ENCODE measurements at regions of chr17 and their contacts with region 1.

Region 1: DNA sequence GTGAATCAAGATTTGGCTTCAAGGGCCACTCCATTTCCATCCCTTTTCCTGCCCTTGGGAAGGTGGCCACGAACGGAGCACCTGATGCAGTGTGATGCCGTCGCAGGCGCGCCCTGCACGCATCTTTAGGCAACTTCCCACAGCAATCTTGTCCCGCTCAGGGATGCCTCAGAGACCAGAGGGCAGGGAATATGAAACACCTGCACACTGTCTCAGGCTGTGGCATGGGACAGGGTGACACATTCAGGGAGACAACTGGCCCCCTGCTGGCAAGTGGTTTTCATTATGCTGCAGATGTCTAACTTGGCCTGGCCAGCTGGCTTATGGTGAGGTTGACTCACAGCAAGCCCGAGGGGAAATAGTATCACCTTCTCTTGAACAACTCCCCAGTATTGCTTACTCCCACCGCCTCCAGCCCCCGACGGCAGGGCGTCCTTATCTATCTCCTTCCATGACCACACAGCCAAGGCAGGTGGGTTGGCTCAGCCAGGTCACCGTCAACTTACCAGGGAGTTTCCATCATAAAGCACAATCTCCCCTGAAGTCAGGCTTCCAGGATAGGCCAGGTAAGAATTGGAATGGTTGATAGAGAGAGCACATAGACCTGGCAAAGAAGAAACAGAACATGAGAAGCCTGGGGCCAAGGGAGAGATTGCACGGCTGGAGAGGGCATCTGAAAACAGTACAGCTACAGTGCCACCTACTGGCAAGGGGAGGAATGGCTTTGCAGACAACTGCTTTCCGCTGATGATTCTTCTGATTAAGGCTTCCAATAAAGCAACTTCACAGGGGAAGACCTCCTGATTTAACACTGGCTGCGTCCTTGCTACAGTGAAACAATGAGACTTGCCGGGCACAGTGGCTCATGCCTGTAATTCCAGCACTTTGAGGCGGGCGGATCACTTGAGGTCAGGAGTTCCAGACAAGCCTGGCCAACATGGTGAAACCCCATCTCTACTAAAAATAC is 21.1 kb downstream of the WIPI1 start:
- DNase-seq: peak; percentile 55
- H3K4me3 ChIP-seq: no peak overlapping the region
- H3K27me3 ChIP-seq: no peaks in the 10 kb centered on the region
- CTCF ChIP-seq: peak; percentile 93

Region 2: GRCh38 chr17:68260051-68260762 is 176.0 kb before region 1 on chr17:
- CTCF ChIA-PET with region 1: interaction called, 52 read pairs
- POLR2A ChIA-PET with region 1: no interaction called
- DNase-seq: no peak
- H3K4me3 ChIP-seq: no peak overlapping the region
- H3K27me3 ChIP-seq: no peaks in the 10 kb centered on the region
- CTCF ChIP-seq: no peak

Region 3: DNA sequence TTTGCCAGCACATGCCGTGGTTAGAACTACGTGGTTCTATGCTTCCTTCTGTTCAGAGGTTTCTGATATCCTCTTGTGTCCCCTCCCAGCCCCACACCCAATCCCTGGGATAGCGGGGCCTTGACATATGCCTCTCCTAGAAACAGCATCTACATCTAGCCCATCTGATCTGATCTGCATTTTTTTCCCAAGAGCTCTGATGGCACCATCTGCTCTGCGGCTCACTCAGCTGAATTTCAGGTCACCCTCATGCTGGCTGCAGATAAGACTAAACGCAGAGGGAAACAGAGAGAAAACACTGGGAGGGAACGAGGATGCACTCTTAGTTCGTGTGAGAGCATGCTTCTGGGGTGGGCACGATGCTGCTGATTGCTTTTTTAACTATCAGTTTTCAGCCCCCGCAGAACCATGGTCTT is 10.5 kb after region 1 on chr17:
- CTCF ChIA-PET with region 1: interaction called, 19 read pairs
- POLR2A ChIA-PET with region 1: no interaction called
- DNase-seq: no peak
- H3K4me3 ChIP-seq: no peak overlapping the region
- H3K27me3 ChIP-seq: no peaks in the 10 kb centered on the region
- CTCF ChIP-seq: no peak

Region 4: DNA sequence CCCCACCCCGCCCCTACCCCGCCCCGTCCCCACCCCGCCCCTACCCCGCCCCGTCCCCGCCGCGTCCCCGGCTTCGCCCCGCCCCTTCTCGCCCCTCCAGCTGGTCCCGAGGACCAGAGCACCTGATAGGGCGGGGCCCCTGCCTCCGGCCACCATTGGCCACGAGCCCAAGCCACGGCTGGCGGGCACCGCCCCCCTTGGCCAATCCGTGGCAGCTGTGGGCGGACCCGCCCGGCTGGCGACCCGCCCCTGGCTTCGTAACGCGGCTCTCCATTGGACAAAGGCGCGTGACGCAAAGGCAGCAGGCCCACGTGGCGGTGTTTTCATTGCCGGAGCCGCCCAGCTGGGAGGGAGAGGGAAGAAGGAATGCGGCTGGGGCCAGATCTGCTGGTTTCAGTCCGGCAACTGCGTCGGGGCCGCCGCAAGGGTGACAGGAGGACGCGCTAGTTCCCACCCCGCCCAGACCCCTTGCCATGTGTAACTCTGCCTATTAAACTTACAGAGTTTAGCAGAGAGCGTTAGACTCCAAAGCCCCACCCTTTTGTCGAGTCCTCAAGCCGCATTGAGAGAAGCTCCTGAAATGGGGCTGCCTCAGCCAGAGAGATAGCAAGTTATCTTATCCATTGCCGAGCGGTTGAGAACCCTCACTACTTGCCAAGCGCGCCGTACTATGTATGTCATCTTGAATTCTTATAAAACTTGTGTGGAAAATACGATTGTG is 21.5 kb after region 1 on chr17:
- CTCF ChIA-PET with region 1: interaction called, 11 read pairs
- POLR2A ChIA-PET with region 1: no interaction called
- DNase-seq: peak; percentile 84
- H3K4me3 ChIP-seq: peak overlapping the region; percentile 55
- H3K27me3 ChIP-seq: 0 out of 2 replicates have a peak, but pooled peaks cover 2% of the 10 kb centered on the region
- CTCF ChIP-seq: 0 out of 2 replicates have a peak, but pooled peaks have one; percentile 5

Region 5: DNA sequence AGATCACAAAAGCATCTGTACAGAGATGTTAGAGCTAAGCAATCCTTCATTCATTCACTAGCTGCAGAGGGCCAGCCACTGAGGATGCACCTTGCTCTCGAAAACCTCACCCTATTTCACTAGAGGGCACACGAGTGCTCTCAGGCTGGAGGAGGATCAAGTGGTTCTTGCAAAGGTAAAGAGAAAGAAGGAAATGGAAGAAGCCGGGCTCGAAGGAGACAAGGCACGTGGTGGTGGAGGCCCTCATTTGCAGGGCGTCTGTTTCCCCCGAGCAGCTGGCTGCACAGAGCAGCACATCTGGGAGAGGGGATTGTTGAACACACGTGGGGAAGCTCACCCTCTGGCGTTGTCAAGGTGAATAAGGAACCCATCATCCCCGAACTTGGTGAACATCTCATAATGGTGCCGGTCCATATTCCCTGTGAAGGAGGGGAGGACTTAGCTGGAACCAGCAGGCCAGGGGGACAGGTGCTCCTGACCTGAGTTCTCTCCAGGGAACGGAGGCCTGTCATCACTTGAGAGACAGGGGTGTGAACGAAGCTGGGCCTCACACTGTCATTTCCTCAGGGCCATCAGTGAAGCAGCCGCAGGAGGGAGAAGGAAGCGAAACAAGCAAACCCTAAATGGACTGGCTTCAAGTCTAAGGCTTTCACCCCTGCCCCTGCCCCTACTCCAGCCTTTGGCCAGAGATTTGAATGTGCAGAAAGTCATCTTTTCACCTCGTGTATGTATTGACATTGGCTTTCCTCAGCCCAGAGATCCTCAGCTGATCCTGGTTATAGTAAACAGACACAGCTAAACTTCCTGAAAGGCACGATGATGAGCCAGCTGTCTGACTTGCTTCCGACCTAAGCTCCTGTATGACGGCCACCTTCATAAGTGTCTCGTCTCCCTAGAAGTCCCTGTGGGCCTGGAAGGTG is 103.6 kb after region 1 on chr17:
- CTCF ChIA-PET with region 1: no interaction called
- POLR2A ChIA-PET with region 1: no interaction called
- DNase-seq: no peak
- H3K4me3 ChIP-seq: no peak overlapping the region
- H3K27me3 ChIP-seq: no peaks in the 10 kb centered on the region
- CTCF ChIP-seq: peak; percentile 56

Measured in BJ (cell line).